Gastrocnemius medialis (tissue), 4 donors: ENCODE measurements at regions of chr7 and their contacts with region 1.

Region 1: GRCh38 chr7:99490878-99491277 is 9.2 kb downstream of the ZNF394 start:
- DNase-seq: no peak
- ATAC-seq: no peak
- H3K4me3 ChIP-seq: no peak overlapping the region
- H3K27ac ChIP-seq: no peak overlapping the region
- H3K4me1 ChIP-seq: no peaks in the 10 kb centered on the region
- H3K27me3 ChIP-seq: no peaks in the 10 kb centered on the region
- CTCF ChIP-seq: no peak
- POLR2A ChIP-seq: no peak

Region 2: GRCh38 chr7:99521399-99521798 is 30.5 kb after region 1 on chr7:
- in situ Hi-C with region 1: no loop called
- intact Hi-C with region 1: loop called (anchors 1 kb)
- DNase-seq: no peak
- ATAC-seq: no peak
- H3K4me3 ChIP-seq: no peak overlapping the region
- H3K27ac ChIP-seq: no peak overlapping the region
- H3K4me1 ChIP-seq: no peaks in the 10 kb centered on the region
- H3K27me3 ChIP-seq: no peaks in the 10 kb centered on the region
- CTCF ChIP-seq: no peak
- POLR2A ChIP-seq: no peak